ENCODE measurements at regions of chr2 and their contacts with region 1.

Region 1: GRCh38 chr2:177212106-177212890 is at the start of gene HNRNPA3:
- DNase-seq: peak; percentile 100
- H3K4me3 Mint-ChIP-seq: peak within 1 kb of the TSS; percentile 97
- H3K27ac Mint-ChIP-seq: peak within 1 kb of the TSS; percentile 99
- H3K4me1 Mint-ChIP-seq: peaks cover 58% of the 10 kb centered on the region
- H3K27me3 Mint-ChIP-seq: no peaks in the 10 kb centered on the region
- total RNA-seq, gene HNRNPA3: 326 and 333 TPM in 2 replicates

Region 2: GRCh38 chr2:176931588-176932563 is 280.4 kb before region 1 on chr2:
- intact Hi-C with region 1: loop called (anchors 1 kb)
- DNase-seq: peak; percentile 39
- H3K4me3 Mint-ChIP-seq: peak overlapping the region; percentile 58
- H3K27ac Mint-ChIP-seq: peak overlapping the region; percentile 95
- H3K4me1 Mint-ChIP-seq: peaks cover 36% of the 10 kb centered on the region
- H3K27me3 Mint-ChIP-seq: peaks cover 3% of the 10 kb centered on the region

Region 3: DNA sequence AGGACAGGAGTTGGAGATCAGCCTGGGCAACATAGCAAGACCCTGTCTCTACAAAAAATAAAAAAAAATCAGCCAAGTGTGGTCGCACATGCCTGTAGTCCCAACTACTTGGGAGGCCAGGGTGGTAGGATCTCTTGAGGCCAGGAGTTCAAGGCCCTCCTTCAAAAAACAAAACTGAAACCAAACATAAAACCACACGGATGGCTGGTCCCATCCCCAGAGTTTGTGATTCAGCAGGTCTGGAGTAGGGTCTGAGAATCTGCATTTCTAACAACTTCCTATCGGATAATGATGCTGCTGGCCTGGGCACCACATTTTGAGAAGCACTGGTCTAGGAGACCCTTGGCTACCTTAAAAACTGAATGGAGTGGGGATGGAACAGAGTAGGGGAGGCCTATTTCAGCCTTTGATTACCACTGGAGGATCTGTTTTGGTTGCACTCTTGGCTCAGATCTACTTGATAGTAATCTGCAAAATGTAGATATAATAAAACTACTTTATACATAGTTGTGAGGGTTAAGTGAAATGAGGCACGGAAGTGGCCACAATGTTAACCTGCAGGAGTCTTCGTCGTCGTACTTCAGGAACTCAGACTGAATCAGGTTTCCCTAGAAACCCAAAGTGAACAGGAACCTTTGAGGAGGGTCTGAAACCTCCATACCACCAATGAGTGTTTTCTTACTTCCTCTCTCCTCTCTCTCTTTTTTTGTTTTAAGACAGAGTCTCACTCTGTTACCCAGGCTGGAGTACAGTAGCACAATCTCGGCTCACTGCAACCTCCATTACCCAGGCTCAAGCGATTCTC is 77.7 kb after region 1 on chr2:
- intact Hi-C with region 1: loop called (anchors 1 kb)
- DNase-seq: peak; percentile 5
- H3K4me3 Mint-ChIP-seq: peak overlapping the region; percentile 63
- H3K27ac Mint-ChIP-seq: peak overlapping the region; percentile 85
- H3K4me1 Mint-ChIP-seq: peaks cover 75% of the 10 kb centered on the region
- H3K27me3 Mint-ChIP-seq: peaks cover 2% of the 10 kb centered on the region

Region 4: DNA sequence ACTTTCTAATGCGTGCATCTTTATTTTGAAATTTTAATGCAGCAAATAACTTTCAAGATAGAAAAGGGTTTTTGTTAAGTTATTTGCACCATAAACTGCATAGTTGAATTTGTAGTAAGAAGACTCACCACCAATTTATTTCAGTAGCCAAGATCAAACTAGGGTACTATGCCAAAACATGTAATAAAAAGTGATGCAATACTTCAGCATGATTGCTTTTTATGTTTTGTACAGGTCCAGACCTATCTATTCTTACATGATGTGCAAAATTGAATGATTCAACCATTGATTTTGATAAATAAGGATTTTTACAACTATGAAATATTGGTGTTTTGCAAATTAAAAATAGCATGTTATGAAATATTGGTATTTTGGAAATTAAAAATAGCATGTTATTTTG is 207.0 kb after region 1 on chr2:
- intact Hi-C with region 1: loop called (anchors 5 kb)
- DNase-seq: no peak
- H3K4me3 Mint-ChIP-seq: no peak overlapping the region
- H3K27ac Mint-ChIP-seq: no peak overlapping the region
- H3K4me1 Mint-ChIP-seq: peaks cover 20% of the 10 kb centered on the region
- H3K27me3 Mint-ChIP-seq: no peaks in the 10 kb centered on the region

Region 5: DNA sequence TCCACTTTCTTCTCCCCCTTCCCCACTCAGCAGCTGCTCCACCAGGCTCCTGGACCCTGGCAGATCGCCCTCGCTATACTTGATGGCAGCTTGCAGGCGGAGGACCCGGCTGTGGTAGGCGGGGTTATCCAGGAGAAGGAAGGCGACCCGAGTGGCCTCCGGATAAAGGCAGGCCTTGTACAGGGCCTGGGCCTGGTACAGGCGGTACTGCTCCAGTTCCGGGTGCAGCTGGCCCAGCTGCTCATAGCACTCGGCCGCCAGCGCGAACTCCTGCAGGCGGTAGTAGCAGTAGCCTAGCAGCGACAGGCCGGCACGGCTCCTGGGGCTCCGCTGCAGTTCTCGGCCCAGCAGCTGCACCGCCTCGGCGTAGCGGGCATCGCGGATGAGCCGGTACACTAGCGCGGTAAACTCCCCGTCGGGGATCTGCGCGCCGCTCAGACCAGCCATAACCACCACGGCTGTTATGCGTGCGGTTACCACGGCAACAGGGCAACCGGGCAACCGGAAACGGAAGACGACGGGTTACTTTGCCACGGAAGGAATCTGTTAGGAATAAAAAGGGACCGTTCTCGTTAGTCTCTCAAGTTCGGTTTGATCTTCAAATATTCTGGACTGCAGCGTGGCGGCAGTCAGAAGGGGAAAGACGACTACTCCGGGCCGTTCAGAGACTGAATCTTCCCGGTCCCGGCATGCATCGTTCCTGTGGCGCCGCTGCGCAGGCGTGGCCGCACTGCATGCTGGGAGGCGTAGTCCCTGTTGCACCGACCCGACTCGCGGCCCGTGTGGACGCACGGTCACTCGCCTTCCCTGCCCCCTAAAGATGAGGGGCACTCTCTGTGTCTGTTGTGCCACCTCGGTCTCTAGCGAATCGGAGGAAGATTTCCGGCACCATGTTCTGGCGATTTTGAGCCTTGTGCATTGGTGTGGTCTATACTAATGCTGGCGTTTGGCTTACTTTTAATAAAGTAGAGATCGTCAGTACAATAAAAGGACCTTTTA is 406.3 kb after region 1 on chr2:
- intact Hi-C with region 1: loop called (anchors 1 kb)
- DNase-seq: peak; percentile 91
- H3K4me3 Mint-ChIP-seq: peak overlapping the region; percentile 94
- H3K27ac Mint-ChIP-seq: peak overlapping the region; percentile 99
- H3K4me1 Mint-ChIP-seq: peaks cover 13% of the 10 kb centered on the region
- H3K27me3 Mint-ChIP-seq: peaks cover 4% of the 10 kb centered on the region